Heart left ventricle (tissue), 16 donors: ENCODE measurements at regions of chr19 and their contacts with region 1.

Region 1: DNA sequence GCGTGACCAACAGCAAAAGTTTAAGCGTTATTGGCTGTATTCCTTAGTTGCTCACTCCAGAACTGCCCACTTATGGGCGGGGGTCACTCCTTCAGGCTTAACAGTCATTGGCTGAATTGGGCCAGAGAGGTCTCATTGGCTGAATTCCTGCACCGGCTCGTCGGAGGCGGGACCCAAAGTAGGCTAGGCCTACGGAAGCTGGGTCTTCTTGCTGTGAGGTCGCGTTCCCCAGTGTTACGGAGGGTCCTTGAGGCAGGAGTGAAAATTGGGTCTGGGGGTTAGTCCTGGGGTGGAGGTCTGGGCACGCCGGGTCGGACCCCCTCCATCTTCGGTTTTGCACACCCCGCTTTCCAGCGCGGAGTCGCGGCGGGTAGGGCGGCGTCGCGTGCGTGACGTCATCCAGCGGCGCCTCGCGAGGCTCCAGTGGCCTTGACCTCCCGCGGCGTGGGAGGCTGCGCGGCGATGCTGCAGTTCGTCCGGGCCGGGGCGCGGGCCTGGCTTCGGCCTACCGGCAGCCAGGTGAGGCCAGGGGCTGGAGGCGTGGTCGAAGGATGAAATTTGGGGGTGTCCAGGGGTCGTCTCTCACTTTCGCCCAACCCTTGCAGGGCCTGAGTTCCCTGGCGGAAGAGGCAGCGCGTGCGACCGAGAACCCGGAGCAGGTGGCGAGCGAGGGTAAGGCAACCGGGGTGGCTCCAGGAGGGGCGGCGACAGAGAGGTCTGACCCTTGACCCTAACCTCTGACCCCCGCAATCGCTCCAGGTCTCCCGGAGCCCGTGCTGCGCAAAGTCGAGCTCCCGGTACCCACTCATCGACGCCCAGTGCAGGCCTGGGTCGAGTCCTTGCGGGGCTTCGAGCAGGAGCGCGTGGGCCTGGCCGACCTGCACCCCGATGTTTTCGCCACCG is at the start of gene MRPL4:
- DNase-seq: peak; percentile 94 to 98 (median 98)
- ATAC-seq: peak; percentile 95 to 96 (median 96)
- H3K4me3 ChIP-seq: peak within 1 kb of the TSS; percentile 60 to 99 (median 84)
- H3K27ac ChIP-seq: peak within 1 kb of the TSS; percentile 2 to 93 (median 84)
- H3K4me1 ChIP-seq: peaks cover 0 to 22% (median 8%) of the 10 kb centered on the region in 12 donors
- H3K27me3 ChIP-seq: no peaks in the 10 kb centered on the region
- CTCF ChIP-seq: no peak
- POLR2A ChIP-seq: peak in 1 of 2 donors; percentile 77
- total RNA-seq, gene MRPL4: 53.7 to 110 (median 68.2) TPM

Region 2: GRCh38 chr19:10106100-10106936 is 145.7 kb before region 1 on chr19 and contains the start of gene PPAN:
- intact Hi-C with region 1: loop called in 6 of 10 experiments (anchors 1 to 10 kb)
- DNase-seq: peak; percentile 98 to 99 (median 99)
- ATAC-seq: peak; percentile 98 to 100 (median 98)
- H3K4me3 ChIP-seq: peak within 1 kb of the TSS; percentile 56 to 96 (median 87)
- H3K27ac ChIP-seq: peak within 1 kb of the TSS; percentile 2 to 94 (median 79)
- H3K4me1 ChIP-seq: peaks cover 0 to 54% (median 13%) of the 10 kb centered on the region in 12 donors
- H3K27me3 ChIP-seq: no peaks in the 10 kb centered on the region
- CTCF ChIP-seq: no peak
- POLR2A ChIP-seq: peak in 1 of 2 donors; percentile 72
- total RNA-seq, gene PPAN: 16.3 to 24.9 (median 19.0) TPM

Region 3: GRCh38 chr19:10112895-10113591 is 139.0 kb before region 1 on chr19:
- intact Hi-C with region 1: loop called in 5 of 10 experiments (anchors 5 to 10 kb)
- DNase-seq: peak in 1 of 5 donors; percentile 71
- ATAC-seq: peak in 3 of 4 donors; percentile 8 to 37 (median 34)
- H3K4me3 ChIP-seq: peak overlapping the region in 1 of 12 donors; percentile 40
- H3K27ac ChIP-seq: peak overlapping the region in 1 of 12 donors; percentile 86
- H3K4me1 ChIP-seq: peaks cover 0 to 37% (median 0%) of the 10 kb centered on the region in 12 donors
- H3K27me3 ChIP-seq: no peaks in the 10 kb centered on the region
- CTCF ChIP-seq: peak; percentile 34 to 60 (median 46)
- POLR2A ChIP-seq: no peak

Region 4: DNA sequence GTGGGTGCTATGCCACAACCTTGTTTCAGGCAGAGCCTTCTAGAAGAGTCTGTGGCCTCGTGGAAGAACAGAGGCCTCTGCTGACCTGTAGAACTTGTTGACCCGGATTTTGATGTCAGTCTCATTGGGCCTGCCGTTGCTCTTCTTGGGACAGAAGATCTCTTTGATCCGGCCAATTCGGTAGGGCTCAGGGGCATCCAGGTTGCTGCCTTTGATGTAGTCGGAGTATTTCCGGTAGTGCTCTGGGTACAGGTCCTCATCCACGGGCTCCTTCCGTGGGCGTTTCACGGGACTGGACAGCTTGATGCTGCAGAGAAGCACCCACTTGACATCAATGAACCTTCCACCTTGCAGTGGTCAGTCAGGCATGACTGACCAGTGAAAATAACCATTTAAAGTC is 108.4 kb before region 1 on chr19:
- intact Hi-C with region 1: no loop called
- DNase-seq: no peak
- ATAC-seq: no peak
- H3K4me3 ChIP-seq: no peak overlapping the region
- H3K27ac ChIP-seq: peak overlapping the region in 1 of 12 donors; percentile 59
- H3K4me1 ChIP-seq: no peaks in the 10 kb centered on the region
- H3K27me3 ChIP-seq: no peaks in the 10 kb centered on the region
- CTCF ChIP-seq: no peak
- POLR2A ChIP-seq: no peak

Region 5: GRCh38 chr19:10194500-10195289 is 57.3 kb before region 1 on chr19 and contains the start of gene DNMT1:
- intact Hi-C with region 1: loop called in 6 of 10 experiments (anchors 1 to 10 kb)
- DNase-seq: peak; percentile 95 to 98 (median 96)
- ATAC-seq: peak; percentile 96 to 99 (median 98)
- H3K4me3 ChIP-seq: peak within 1 kb of the TSS; percentile 46 to 94 (median 76)
- H3K27ac ChIP-seq: peak within 1 kb of the TSS; percentile 52 to 92 (median 86)
- H3K4me1 ChIP-seq: peaks cover 0 to 53% (median 20%) of the 10 kb centered on the region in 12 donors
- H3K27me3 ChIP-seq: no peaks in the 10 kb centered on the region
- CTCF ChIP-seq: no peak
- POLR2A ChIP-seq: peak in 1 of 2 donors; percentile 71
- total RNA-seq, gene DNMT1: 16.1 to 61.6 (median 25.8) TPM

Region 6: DNA sequence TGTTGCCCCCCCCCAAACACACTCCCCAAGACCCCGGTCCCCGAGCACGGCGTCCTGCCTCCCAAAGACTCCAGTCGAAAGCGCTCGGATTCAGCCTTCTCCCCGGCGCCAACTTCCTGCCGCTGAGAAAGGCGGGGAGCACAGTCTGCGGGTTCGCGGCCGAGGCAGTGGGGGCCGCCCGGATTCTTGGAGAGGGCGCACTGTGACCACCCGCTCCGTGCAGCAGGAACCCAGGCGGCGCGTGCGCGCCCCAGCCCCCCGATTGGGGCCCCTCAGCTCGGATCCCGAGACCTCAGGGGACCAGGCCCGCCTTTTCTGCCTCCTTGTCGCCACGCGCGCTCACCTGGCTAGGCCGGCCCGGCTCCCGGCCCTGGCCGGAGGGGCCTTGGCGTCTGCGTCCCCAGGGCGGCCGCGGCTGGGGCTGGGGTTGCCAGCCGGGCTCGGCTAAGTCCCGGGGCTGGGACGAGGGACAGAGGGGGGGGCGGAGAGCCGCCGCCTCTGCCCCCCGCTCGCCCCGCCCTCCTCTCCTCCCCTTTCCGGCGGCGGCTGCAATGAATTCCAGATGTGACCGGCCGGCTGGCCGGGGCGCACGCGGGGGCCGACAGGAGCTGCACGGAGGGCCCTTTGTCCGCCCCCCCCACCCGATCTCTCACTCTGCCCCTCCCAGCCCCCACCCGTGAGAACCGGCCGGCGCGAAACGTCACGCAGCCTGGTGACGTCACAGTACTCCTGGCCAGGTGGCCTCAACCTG is 21.0 kb before region 1 on chr19 and contains the start of gene S1PR2:
- intact Hi-C with region 1: loop called in 4 of 10 experiments (anchors 2 kb)
- DNase-seq: peak; percentile 87 to 92 (median 89)
- ATAC-seq: peak; percentile 30 to 73 (median 68)
- H3K4me3 ChIP-seq: peak within 1 kb of the TSS; percentile 68 to 99 (median 90)
- H3K27ac ChIP-seq: peak within 1 kb of the TSS; percentile 54 to 99 (median 94)
- H3K4me1 ChIP-seq: peaks cover 0 to 60% (median 36%) of the 10 kb centered on the region in 12 donors
- H3K27me3 ChIP-seq: peaks cover 0 to 11% (median 0%) of the 10 kb centered on the region in 9 donors
- CTCF ChIP-seq: peak in 2 of 12 donors; percentile 7 to 10
- POLR2A ChIP-seq: peak in 1 of 2 donors; percentile 60
- total RNA-seq, gene S1PR2: 1.7 to 14.2 (median 4.4) TPM